Prostate gland (tissue), 2 donors: ENCODE measurements at regions of chr3 and their contacts with region 1.

Region 1: DNA sequence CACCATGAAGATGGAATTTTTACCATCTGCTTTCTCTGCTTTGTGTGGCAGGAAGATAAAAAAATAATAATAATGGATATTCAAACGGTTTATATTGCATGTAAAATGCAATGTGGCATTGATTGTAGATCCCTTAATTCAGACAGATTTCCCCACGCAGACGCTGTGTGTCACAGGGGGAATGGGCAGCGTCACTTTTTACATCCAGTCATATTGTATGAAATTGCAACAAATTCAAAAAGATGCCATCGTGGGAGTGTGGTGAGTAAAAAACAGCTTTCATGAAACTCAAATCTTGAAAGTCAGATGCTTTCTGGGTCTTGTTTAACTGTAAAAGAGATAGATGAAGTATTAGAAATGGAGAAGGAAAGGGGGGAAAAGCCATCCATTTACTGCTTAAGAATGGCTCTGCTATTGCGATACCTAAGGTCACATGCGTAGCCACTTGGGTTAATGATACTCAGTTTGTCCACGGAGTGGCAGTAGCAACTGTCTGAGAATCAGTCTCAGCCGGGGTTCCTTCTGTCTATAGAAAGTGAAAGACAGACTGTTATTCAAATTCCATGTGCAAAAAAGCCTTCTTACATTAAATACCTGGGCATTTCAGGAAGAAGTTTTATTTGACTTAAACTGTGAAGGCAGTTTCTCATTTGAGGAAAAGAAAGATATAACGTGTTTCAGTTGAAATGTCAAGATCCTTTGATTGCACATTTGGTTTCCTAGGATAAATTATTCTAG is 28.5 kb downstream of the BTD start:
- DNase-seq: peak; percentile 67
- H3K4me3 ChIP-seq: no peak overlapping the region
- H3K27ac ChIP-seq: no peak overlapping the region
- H3K4me1 ChIP-seq: peaks cover 6% of the 10 kb centered on the region
- H3K27me3 ChIP-seq: no peaks in the 10 kb centered on the region
- CTCF ChIP-seq: peak; percentile 54 to 76 (median 72)
- POLR2A ChIP-seq: no peak

Region 2: GRCh38 chr3:15399970-15400369 is 230.1 kb before region 1 on chr3:
- intact Hi-C with region 1: no loop called
- DNase-seq: no peak
- H3K4me3 ChIP-seq: no peak overlapping the region
- H3K27ac ChIP-seq: no peak overlapping the region
- H3K4me1 ChIP-seq: no peaks in the 10 kb centered on the region
- H3K27me3 ChIP-seq: no peaks in the 10 kb centered on the region
- CTCF ChIP-seq: no peak
- POLR2A ChIP-seq: no peak

Region 3: DNA sequence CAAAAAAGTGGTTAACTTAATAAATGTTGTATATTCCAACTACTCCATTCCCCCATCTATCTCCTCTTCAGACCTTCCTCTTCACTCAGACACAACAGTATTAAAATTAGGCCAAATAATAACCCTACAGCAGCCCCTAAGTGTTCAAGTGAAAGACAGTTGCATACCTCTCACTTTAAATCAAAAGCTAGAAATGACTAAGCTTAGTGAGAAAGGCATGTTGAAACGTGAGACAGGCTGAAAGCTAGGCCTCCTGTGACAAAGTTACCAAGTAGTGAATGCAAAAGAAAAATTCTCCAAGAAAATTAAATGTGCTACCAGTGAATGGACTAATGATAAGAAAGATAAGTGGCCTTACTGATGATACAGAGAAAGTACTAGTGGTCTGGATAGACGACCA is 96.0 kb after region 1 on chr3:
- intact Hi-C with region 1: no loop called
- DNase-seq: no peak
- H3K4me3 ChIP-seq: no peak overlapping the region
- H3K27ac ChIP-seq: no peak overlapping the region
- H3K4me1 ChIP-seq: no peaks in the 10 kb centered on the region
- H3K27me3 ChIP-seq: no peaks in the 10 kb centered on the region
- CTCF ChIP-seq: no peak
- POLR2A ChIP-seq: no peak

Region 4: DNA sequence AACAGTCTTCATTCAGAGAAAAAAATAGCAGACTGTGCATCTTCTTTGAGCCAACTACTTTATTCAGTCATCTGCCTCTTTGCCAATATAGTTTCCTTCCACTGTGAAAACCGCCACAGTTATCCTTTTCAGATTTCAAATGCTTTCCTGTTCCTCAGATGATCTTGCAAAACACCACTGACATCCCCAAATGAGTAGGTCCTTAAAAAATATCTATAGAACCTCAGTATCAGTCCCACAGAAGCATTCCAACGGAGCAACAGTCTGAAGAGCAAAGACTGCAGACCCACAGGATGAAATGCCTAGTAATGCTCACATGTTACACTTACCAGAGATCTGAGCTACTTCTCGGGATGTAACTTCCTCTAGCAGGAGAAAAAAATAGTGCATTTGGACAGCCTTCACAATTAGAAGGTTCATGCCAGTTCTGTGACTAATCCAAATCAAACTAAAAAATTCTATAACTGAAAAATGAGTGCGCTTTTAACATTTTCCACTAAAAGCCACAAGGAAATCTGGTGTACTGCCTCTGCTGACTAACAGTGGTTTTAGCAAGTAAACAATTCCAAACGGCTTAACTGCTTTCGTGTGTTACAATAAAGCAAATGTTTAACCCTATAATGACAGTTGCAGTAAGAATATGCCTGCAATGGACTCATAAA is 167.7 kb after region 1 on chr3 and contains the start of gene ANKRD28:
- intact Hi-C with region 1: loop called (anchors 5 kb)
- DNase-seq: no peak
- H3K4me3 ChIP-seq: peak within 1 kb of the TSS; percentile 15 to 16
- H3K27ac ChIP-seq: peak within 1 kb of the TSS; percentile 66 to 72
- H3K4me1 ChIP-seq: no peaks in the 10 kb centered on the region
- H3K27me3 ChIP-seq: no peaks in the 10 kb centered on the region
- CTCF ChIP-seq: peak in 1 of 4 experiments; percentile 9
- POLR2A ChIP-seq: no peak
- total RNA-seq, gene ANKRD28: 18.4 to 35.8 TPM

Region 5: GRCh38 chr3:16247276-16248061 is 617.4 kb after region 1 on chr3:
- intact Hi-C with region 1: loop called (anchors 10 kb)
- DNase-seq: peak; percentile 76
- H3K4me3 ChIP-seq: no peak overlapping the region
- H3K27ac ChIP-seq: no peak overlapping the region
- H3K4me1 ChIP-seq: no peaks in the 10 kb centered on the region
- H3K27me3 ChIP-seq: no peaks in the 10 kb centered on the region
- CTCF ChIP-seq: peak; percentile 87 to 96 (median 90)
- POLR2A ChIP-seq: no peak